H1 (cell line): ENCODE measurements at regions of chr10 and their contacts with region 1.

Region 1: GRCh38 chr10:34994565-34995142 is 95.5 kb downstream of the CUL2 start:
- DNase-seq: peak; percentile 75 to 77
- H3K4me3 ChIP-seq: no peak overlapping the region
- H3K27ac ChIP-seq: no peak overlapping the region
- H3K4me1 ChIP-seq: peaks cover 2 to 10% (median 5%) of the 10 kb centered on the region in 4 experiments; a peak in 4 of 7 replicates
- H3K27me3 ChIP-seq: no peaks in the 10 kb centered on the region; a peak in 1 of 7 replicates
- CTCF ChIP-seq: peak; percentile 36 to 87 (median 84)
- EP300 ChIP-seq: peak in 1 of 2 experiments; percentile 89; a peak in 2 of 3 replicates
- POLR2A ChIP-seq: no peak
- RAD21 ChIP-seq: peak; percentile 86 to 95

Region 2: DNA sequence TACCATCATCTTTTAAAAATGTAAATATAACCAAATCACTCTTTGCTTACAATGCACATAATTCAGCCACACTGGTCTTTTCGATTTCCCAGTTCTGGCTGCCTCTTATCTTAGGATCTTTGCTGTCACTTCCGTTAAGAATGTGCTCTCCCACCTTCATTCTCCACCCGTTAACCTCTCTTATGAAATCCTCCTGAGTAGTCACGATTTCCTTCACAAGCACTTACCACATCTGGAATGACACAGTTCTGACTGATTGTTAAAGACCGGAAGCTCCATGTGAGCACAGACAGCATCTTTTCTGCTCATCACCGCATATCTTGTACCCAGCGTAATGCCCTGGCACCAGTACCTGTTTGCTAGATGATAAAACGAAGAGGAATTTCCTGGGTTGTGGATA is 11.2 kb after region 1 on chr10:
- CTCF ChIA-PET with region 1: interaction called, 13 read pairs
- POLR2A ChIA-PET with region 1: interaction called, 3 read pairs
- DNase-seq: no peak
- H3K4me3 ChIP-seq: no peak overlapping the region
- H3K27ac ChIP-seq: no peak overlapping the region
- H3K4me1 ChIP-seq: peaks cover 0 to 8% (median 1%) of the 10 kb centered on the region in 4 experiments; a peak in 4 of 7 replicates
- H3K27me3 ChIP-seq: no peaks in the 10 kb centered on the region
- CTCF ChIP-seq: no peak
- EP300 ChIP-seq: no peak
- POLR2A ChIP-seq: no peak
- RAD21 ChIP-seq: no peak

Region 3: GRCh38 chr10:35027567-35027966 is 32.9 kb after region 1 on chr10:
- CTCF ChIA-PET with region 1: interaction called, 35 read pairs
- POLR2A ChIA-PET with region 1: no interaction called
- DNase-seq: no peak
- H3K4me3 ChIP-seq: no peak overlapping the region
- H3K27ac ChIP-seq: no peak overlapping the region
- H3K4me1 ChIP-seq: no peaks in the 10 kb centered on the region
- H3K27me3 ChIP-seq: no peaks in the 10 kb centered on the region
- CTCF ChIP-seq: peak in 1 of 3 experiments; percentile 11; a peak in 2 of 4 replicates
- EP300 ChIP-seq: no peak
- POLR2A ChIP-seq: no peak
- RAD21 ChIP-seq: no peak; a peak in 1 of 4 replicates